A549 (cell line): ENCODE measurements at regions of chr17 and their contacts with region 1.

Region 1: GRCh38 chr17:43673516-43674323 is 12.0 kb upstream of the MEOX1 start:
- DNase-seq: peak; percentile 68 to 82
- ATAC-seq: peak; percentile 55 to 81; a peak in 5 of 6 replicates
- H3K4me3 ChIP-seq: no peak overlapping the region
- H3K27ac ChIP-seq: no peak overlapping the region
- H3K4me1 ChIP-seq: peaks cover 3% of the 10 kb centered on the region; the same call in 1 of the 3 replicates
- CTCF ChIP-seq: peak; percentile 99
- EP300 ChIP-seq: no peak
- POLR2A ChIP-seq: no peak
- RAD21 ChIP-seq: peak; percentile 95 to 98

Region 2: DNA sequence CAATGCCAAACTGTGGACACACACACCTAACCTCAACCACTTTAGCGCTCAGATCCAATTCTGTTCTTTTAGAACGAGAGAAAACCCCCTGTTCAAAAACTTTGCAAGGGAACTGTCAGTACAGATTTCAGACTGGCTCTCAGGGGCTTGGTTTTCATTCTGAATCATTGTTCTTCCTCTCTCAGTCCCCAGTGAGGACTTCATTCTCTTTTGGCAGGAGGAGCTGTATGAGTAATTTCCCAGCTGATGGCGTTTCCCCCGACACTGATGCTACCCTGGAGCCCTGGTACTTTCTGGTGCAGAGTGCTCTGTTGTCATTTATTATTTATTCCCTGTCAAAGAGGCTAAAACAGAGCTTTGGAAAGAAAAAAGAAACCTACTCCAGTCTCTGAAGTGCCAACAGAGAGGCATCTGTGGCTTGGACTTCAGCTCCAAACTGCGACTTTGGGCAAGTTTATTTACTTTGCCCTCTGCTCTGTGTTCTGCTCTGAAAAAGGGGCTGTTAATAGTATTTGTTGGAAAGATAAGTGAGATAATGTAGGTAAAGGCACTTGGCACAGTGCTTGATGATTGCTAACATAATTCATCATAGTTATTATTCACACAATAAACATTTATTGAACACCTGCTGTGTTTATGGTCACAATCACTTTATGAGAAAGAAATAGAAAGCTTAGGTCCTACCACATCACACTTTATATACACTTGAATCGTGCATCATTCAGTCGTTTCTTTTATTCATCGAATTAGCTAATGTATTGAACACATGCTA is 155.9 kb before region 1 on chr17:
- CTCF ChIA-PET with region 1: interaction called, 11 read pairs
- POLR2A ChIA-PET with region 1: no interaction called
- DNase-seq: no peak
- ATAC-seq: no peak
- H3K4me3 ChIP-seq: no peak overlapping the region
- H3K27ac ChIP-seq: no peak overlapping the region
- H3K4me1 ChIP-seq: no peaks in the 10 kb centered on the region
- CTCF ChIP-seq: no peak
- EP300 ChIP-seq: no peak
- POLR2A ChIP-seq: no peak
- RAD21 ChIP-seq: no peak

Region 3: GRCh38 chr17:43556292-43556691 is 117.4 kb before region 1 on chr17:
- CTCF ChIA-PET with region 1: interaction called, 33 read pairs
- POLR2A ChIA-PET with region 1: no interaction called
- DNase-seq: peak; percentile 95 to 96
- ATAC-seq: peak; percentile 67 to 91
- H3K4me3 ChIP-seq: no peak overlapping the region
- H3K27ac ChIP-seq: peak overlapping the region; percentile 64 to 85
- H3K4me1 ChIP-seq: peaks cover 56% of the 10 kb centered on the region
- CTCF ChIP-seq: no peak
- EP300 ChIP-seq: no peak
- POLR2A ChIP-seq: no peak
- RAD21 ChIP-seq: no peak

Region 4: DNA sequence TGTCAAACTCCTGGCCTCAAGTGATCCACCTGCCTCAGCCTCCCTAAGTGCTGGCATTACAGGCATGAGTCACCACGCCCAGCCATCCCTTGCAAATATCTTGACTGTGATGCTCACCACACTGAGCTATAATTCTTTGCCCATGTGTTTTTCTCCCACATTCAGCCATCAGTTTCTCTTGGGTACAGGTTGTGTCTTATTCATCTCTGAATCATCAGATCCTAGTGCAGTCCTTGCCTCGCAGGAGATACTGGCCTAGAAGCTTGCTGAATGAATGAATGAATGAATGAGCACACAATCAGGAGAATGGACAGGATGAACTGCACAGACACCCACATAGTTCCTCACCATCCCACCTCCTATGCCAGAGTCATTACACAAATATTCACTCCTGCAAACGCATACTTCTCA is 103.2 kb before region 1 on chr17:
- CTCF ChIA-PET with region 1: interaction called, 18 read pairs
- POLR2A ChIA-PET with region 1: interaction called, 8 read pairs
- DNase-seq: peak in 1 of 2 experiments; percentile 43
- ATAC-seq: peak in 1 of 2 experiments; percentile 35; a peak in 3 of 6 replicates
- H3K4me3 ChIP-seq: no peak overlapping the region
- H3K27ac ChIP-seq: no peak overlapping the region
- H3K4me1 ChIP-seq: peaks cover 24% of the 10 kb centered on the region
- CTCF ChIP-seq: no peak
- EP300 ChIP-seq: no peak
- POLR2A ChIP-seq: no peak
- RAD21 ChIP-seq: no peak

Region 5: DNA sequence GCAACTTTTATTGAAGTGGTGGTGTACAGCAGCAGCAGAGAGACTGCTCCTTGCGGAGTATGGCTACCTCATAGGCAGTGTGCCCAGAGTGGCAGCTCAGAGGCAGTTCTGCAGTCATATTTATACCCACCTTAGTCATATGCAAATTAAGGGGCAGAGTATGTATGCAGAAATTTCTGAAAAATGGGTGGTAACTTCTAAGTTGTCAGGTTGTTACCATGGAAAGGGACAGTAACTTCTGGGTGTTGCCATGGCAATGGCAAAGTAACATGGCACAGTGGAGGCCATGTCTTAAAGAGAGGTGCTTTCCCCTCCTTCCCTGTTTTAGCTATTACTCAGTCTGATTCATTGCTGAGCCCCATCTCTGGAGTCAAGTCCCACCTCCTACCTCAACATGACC is 65.4 kb before region 1 on chr17:
- CTCF ChIA-PET with region 1: interaction called, 15 read pairs
- POLR2A ChIA-PET with region 1: no interaction called
- DNase-seq: peak in 1 of 2 experiments; percentile 75
- ATAC-seq: peak; percentile 56 to 75
- H3K4me3 ChIP-seq: no peak overlapping the region
- H3K27ac ChIP-seq: no peak overlapping the region
- H3K4me1 ChIP-seq: 0 out of 3 replicates have a peak, but pooled peaks cover 5% of the 10 kb centered on the region
- CTCF ChIP-seq: no peak
- EP300 ChIP-seq: no peak
- POLR2A ChIP-seq: no peak
- RAD21 ChIP-seq: no peak

Region 6: GRCh38 chr17:43645765-43646481 is 27.8 kb before region 1 on chr17:
- CTCF ChIA-PET with region 1: interaction called, 27 read pairs
- POLR2A ChIA-PET with region 1: no interaction called
- DNase-seq: no peak
- ATAC-seq: no peak
- H3K4me3 ChIP-seq: no peak overlapping the region
- H3K27ac ChIP-seq: no peak overlapping the region
- H3K4me1 ChIP-seq: no peaks in the 10 kb centered on the region
- CTCF ChIP-seq: no peak
- EP300 ChIP-seq: no peak
- POLR2A ChIP-seq: no peak
- RAD21 ChIP-seq: no peak

Region 7: GRCh38 chr17:43658900-43659299 is 14.8 kb before region 1 on chr17:
- CTCF ChIA-PET with region 1: interaction called, 21 read pairs
- POLR2A ChIA-PET with region 1: no interaction called
- DNase-seq: no peak
- ATAC-seq: no peak
- H3K4me3 ChIP-seq: no peak overlapping the region
- H3K27ac ChIP-seq: no peak overlapping the region
- H3K4me1 ChIP-seq: no peaks in the 10 kb centered on the region; the same call in 2 of the 3 replicates
- CTCF ChIP-seq: no peak
- EP300 ChIP-seq: no peak
- POLR2A ChIP-seq: no peak
- RAD21 ChIP-seq: no peak